ENCODE measurements at regions of chr1 and their contacts with region 1.

Region 1: GRCh38 chr1:150149271-150150132 is at the start of gene PLEKHO1:
- DNase-seq: peak; percentile 55 to 91 (median 69)
- ATAC-seq: peak; percentile 56 to 74
- H3K4me3 Mint-ChIP-seq: peak within 1 kb of the TSS; percentile 91 to 98 (median 94)
- H3K27ac Mint-ChIP-seq: peak within 1 kb of the TSS; percentile 92 to 99 (median 97)
- H3K4me1 Mint-ChIP-seq: peaks cover 46 to 73% (median 69%) of the 10 kb centered on the region in 4 donors
- H3K27me3 Mint-ChIP-seq: no peaks in the 10 kb centered on the region
- polyA plus RNA-seq, gene PLEKHO1: 19.4 to 30.8 (median 30.4) TPM

Region 2: GRCh38 chr1:150072959-150073358 is 76.5 kb before region 1 on chr1:
- POLR2A ChIA-PET with region 1: interaction called, 11 read pairs
- DNase-seq: peak in 3 of 10 donors; percentile 41 to 50 (median 47)
- ATAC-seq: peak; percentile 74
- H3K4me3 Mint-ChIP-seq: peak overlapping the region in 1 of 10 donors; percentile 7
- H3K27ac Mint-ChIP-seq: peak overlapping the region in 6 of 10 donors; percentile 2 to 84 (median 30)
- H3K4me1 Mint-ChIP-seq: peaks cover 18 to 33% (median 27%) of the 10 kb centered on the region in 4 donors
- H3K27me3 Mint-ChIP-seq: no peaks in the 10 kb centered on the region

Region 3: GRCh38 chr1:150109586-150109985 is 39.9 kb before region 1 on chr1:
- POLR2A ChIA-PET with region 1: interaction called, 54 read pairs
- DNase-seq: peak in 3 of 10 donors; percentile 15 to 39 (median 26)
- ATAC-seq: peak; percentile 65 to 70
- H3K4me3 Mint-ChIP-seq: peak overlapping the region; percentile 63 to 82 (median 79)
- H3K27ac Mint-ChIP-seq: peak overlapping the region; percentile 75 to 94 (median 88)
- H3K4me1 Mint-ChIP-seq: peaks cover 51 to 74% (median 66%) of the 10 kb centered on the region in 4 donors
- H3K27me3 Mint-ChIP-seq: no peaks in the 10 kb centered on the region

Region 4: GRCh38 chr1:150162862-150163706 is 13.6 kb after region 1 on chr1:
- POLR2A ChIA-PET with region 1: interaction called, 87 read pairs
- DNase-seq: peak in 2 of 10 donors; percentile 19 to 30
- ATAC-seq: peak; percentile 29 to 52
- H3K4me3 Mint-ChIP-seq: peak overlapping the region; percentile 27 to 73 (median 62)
- H3K27ac Mint-ChIP-seq: peak overlapping the region; percentile 13 to 83 (median 66)
- H3K4me1 Mint-ChIP-seq: peaks cover 26 to 80% (median 50%) of the 10 kb centered on the region in 4 donors
- H3K27me3 Mint-ChIP-seq: no peaks in the 10 kb centered on the region

Region 5: GRCh38 chr1:150194381-150195031 is 45.0 kb after region 1 on chr1:
- POLR2A ChIA-PET with region 1: no interaction called
- DNase-seq: no peak
- ATAC-seq: no peak
- H3K4me3 Mint-ChIP-seq: no peak overlapping the region
- H3K27ac Mint-ChIP-seq: no peak overlapping the region
- H3K4me1 Mint-ChIP-seq: no peaks in the 10 kb centered on the region
- H3K27me3 Mint-ChIP-seq: peaks cover 0 to 12% (median 4%) of the 10 kb centered on the region in 5 donors

Measured in naive thymus-derived CD8-positive, alpha-beta T cell (primary cell).